ENCODE measurements at regions of chr16 and their contacts with region 1.

Region 1: GRCh38 chr16:75361936-75362335 is 71.4 kb downstream of the CFDP1 start:
- DNase-seq: peak; percentile 23
- H3K4me3 ChIP-seq: no peak overlapping the region
- H3K27ac ChIP-seq: no peak overlapping the region
- H3K4me1 ChIP-seq: no peaks in the 10 kb centered on the region
- H3K27me3 ChIP-seq: no peaks in the 10 kb centered on the region
- CTCF ChIP-seq: no peak
- POLR2A ChIP-seq: no peak

Region 2: DNA sequence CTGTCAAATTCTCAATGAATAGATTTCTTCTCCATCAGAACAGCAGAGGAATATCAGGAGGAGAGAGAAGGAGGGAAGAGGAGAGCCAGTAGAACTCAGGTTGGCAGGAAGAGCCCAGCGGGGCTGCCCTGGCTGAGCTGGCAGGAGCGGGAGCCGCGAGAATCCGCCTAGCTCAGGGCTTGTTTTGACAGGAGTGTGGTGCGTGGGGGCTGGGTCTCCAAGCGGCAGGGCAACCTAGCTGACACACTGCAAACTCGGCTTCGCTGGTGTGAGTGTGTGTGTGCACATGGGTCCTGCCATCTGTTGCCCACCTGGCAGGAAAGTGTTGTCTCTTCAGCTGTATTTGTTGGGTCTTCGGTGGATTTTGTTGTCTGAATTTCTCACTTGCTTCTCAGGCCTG is 82.6 kb before region 1 on chr16:
- CTCF ChIA-PET with region 1: no interaction called
- POLR2A ChIA-PET with region 1: no interaction called
- dilution Hi-C with region 1: no loop called
- intact Hi-C with region 1: no loop called
- DNase-seq: no peak
- H3K4me3 ChIP-seq: no peak overlapping the region
- H3K27ac ChIP-seq: no peak overlapping the region
- H3K4me1 ChIP-seq: peaks cover 7% of the 10 kb centered on the region
- H3K27me3 ChIP-seq: no peaks in the 10 kb centered on the region
- CTCF ChIP-seq: no peak
- POLR2A ChIP-seq: no peak

Region 3: GRCh38 chr16:75293772-75294171 is 68.2 kb before region 1 on chr16:
- CTCF ChIA-PET with region 1: no interaction called
- POLR2A ChIA-PET with region 1: no interaction called
- dilution Hi-C with region 1: no loop called
- intact Hi-C with region 1: no loop called
- DNase-seq: no peak
- H3K4me3 ChIP-seq: no peak overlapping the region
- H3K27ac ChIP-seq: no peak overlapping the region
- H3K4me1 ChIP-seq: peaks cover 24% of the 10 kb centered on the region
- H3K27me3 ChIP-seq: no peaks in the 10 kb centered on the region
- CTCF ChIP-seq: no peak
- POLR2A ChIP-seq: no peak

Region 4: DNA sequence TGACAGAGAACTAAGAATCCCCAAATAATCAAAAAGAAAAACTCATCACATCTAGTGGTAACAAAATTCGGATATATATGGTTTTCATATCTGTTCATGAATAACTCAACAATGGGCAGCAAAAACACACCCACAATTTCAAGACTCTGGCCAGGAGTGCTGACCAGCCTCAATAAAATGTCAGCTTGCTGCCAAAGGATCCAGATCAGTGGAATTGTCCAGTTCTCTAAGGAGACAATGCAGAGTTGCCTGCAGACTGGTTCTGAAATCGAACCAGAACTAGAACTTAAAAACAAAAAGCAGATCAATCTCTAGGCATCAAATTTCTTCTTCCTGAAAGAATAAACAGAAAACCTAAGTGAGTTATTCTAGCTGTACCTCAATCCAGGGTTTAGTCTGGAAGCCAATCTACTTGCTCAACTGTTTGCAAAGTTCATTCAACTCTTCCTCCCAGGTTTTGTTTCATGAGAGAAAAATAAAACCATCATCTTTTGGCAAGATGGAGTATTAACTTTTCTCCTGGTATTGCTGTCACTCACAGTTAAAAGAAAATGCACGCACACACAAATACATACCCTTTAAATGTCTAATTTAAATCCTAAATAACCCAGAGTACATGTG is 10.4 kb after region 1 on chr16:
- CTCF ChIA-PET with region 1: interaction called, 13 read pairs
- POLR2A ChIA-PET with region 1: interaction called, 4 read pairs
- dilution Hi-C with region 1: no loop called
- intact Hi-C with region 1: loop called (anchors 2 kb)
- DNase-seq: peak; percentile 40
- H3K4me3 ChIP-seq: no peak overlapping the region
- H3K27ac ChIP-seq: no peak overlapping the region
- H3K4me1 ChIP-seq: peaks cover 3% of the 10 kb centered on the region
- H3K27me3 ChIP-seq: no peaks in the 10 kb centered on the region
- CTCF ChIP-seq: no peak
- POLR2A ChIP-seq: no peak